Esophagus squamous epithelium (tissue), 5 donors: ENCODE measurements at regions of chr12 and their contacts with region 1.

Region 1: DNA sequence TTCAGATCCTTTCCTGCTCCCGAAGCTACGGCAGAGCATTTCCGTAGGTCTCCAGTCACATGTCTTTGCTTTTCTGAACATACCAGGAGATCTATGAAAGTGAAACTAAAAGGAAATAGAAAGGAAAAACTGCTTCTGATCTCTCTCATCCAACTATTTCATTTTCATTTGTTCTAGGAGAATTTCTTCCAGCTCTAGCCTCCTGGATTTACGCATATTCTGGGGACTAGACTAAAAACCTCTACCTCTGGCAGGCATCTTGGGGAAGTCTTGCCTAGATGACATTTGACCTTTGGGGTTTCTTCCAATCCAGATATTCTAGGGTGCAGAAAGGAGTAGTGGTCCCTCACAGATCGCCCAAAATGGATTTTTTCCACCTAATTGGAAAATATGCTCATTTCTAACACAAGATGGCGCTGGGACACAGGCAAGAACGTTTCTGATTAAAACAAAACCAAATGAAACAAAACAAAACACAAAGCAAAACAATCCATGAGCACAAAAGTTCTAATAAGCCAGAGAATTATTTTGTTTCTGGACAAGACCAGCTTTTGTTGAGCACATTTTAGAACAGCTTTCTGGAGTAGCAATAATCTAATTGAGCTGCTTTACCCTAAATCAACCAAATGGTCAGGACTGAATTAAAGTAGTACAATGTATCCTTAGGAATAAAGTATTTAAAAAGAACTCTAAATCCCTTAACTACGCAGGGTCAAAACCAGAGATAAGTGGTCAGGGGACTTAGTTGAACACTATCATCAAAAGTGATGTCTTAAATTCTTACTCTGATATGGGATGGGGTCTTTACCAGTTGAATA is 12.3 kb upstream of the PARP11 start:
- DNase-seq: no peak
- H3K4me3 ChIP-seq: peak overlapping the region in 3 of 4 donors; percentile 24 to 52 (median 35)
- H3K27ac ChIP-seq: peak overlapping the region in 3 of 4 donors; percentile 53 to 74 (median 57)
- H3K4me1 ChIP-seq: peaks cover 0 to 12% (median 0%) of the 10 kb centered on the region in 3 donors
- H3K27me3 ChIP-seq: peaks cover 0 to 18% (median 0%) of the 10 kb centered on the region in 4 donors
- CTCF ChIP-seq: peak; percentile 62 to 84 (median 78)
- POLR2A ChIP-seq: no peak

Region 2: GRCh38 chr12:4037747-4038312 is 152.3 kb after region 1 on chr12:
- intact Hi-C with region 1: loop called (anchors 5 kb)
- DNase-seq: no peak
- H3K4me3 ChIP-seq: no peak overlapping the region
- H3K27ac ChIP-seq: no peak overlapping the region
- H3K4me1 ChIP-seq: peaks cover 2 to 11% (median 6%) of the 10 kb centered on the region in 3 donors
- H3K27me3 ChIP-seq: peaks cover 0 to 7% (median 0%) of the 10 kb centered on the region in 4 donors
- CTCF ChIP-seq: peak; percentile 39 to 80 (median 71)
- POLR2A ChIP-seq: no peak